HEK293 (cell line): ENCODE measurements at regions of chr11 and their contacts with region 1.

Region 1: GRCh38 chr11:118435893-118436624 is at the start of gene KMT2A:
- H3K4me3 ChIP-seq: peak within 1 kb of the TSS; percentile 92
- H3K27ac ChIP-seq: peak within 1 kb of the TSS; percentile 78
- H3K4me1 ChIP-seq: peaks cover 4% of the 10 kb centered on the region; the same call in 1 of the 2 replicates
- CTCF ChIP-seq: no peak

Region 2: GRCh38 chr11:118290923-118291322 is 145.1 kb before region 1 on chr11:
- CTCF ChIA-PET with region 1: no interaction called
- POLR2A ChIA-PET with region 1: no interaction called
- H3K4me3 ChIP-seq: no peak overlapping the region
- H3K27ac ChIP-seq: no peak overlapping the region
- H3K4me1 ChIP-seq: no peaks in the 10 kb centered on the region
- CTCF ChIP-seq: no peak

Region 3: DNA sequence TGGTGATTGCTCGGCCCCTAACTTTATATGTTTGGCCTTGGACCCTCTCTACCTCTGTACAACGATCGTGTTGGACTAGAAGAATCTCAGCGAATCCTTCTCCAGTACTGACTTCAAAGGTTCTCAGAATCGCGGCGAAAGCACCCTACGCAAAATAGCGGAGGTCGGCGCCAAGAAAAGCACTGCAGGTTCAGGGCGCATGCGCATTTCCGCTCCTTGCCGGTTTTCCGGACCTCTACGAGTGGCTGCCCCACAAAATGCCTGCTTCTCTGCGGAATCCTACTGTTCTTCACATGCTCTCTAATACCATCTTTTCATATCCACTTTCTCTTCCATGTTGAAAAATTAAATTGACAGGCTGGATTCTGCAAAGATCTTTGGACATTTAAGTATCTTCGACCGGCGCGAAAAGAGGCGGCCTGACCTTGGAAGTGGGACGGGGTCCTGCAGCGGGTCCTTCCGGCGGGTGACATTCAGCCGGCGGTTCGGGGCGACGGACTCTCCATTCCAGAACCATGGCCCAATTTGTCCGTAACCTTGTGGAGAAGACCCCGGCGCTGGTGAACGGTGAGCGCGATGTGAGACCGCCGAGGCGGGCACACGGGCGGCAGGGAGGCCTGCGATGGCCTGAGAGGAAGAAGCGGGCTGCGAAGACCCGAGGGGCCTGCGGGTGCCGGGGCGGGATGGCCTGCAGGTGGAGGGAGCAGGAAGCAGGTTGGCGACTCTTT is 34.7 kb before region 1 on chr11 and contains the start of gene ATP5MG:
- CTCF ChIA-PET with region 1: interaction called, 3 read pairs
- POLR2A ChIA-PET with region 1: interaction called, 13 read pairs
- H3K4me3 ChIP-seq: peak within 1 kb of the TSS; percentile 92
- H3K27ac ChIP-seq: peak within 1 kb of the TSS; percentile 61
- H3K4me1 ChIP-seq: peaks cover under 1% of the 10 kb centered on the region; the same call in 1 of the 2 replicates
- CTCF ChIP-seq: no peak; the same call in 1 of the 2 replicates

Region 4: GRCh38 chr11:118415739-118416284 is 20.2 kb before region 1 on chr11:
- CTCF ChIA-PET with region 1: no interaction called
- POLR2A ChIA-PET with region 1: interaction called, 14 read pairs
- H3K4me3 ChIP-seq: no peak overlapping the region
- H3K27ac ChIP-seq: no peak overlapping the region
- H3K4me1 ChIP-seq: no peaks in the 10 kb centered on the region
- CTCF ChIP-seq: no peak

Region 5: DNA sequence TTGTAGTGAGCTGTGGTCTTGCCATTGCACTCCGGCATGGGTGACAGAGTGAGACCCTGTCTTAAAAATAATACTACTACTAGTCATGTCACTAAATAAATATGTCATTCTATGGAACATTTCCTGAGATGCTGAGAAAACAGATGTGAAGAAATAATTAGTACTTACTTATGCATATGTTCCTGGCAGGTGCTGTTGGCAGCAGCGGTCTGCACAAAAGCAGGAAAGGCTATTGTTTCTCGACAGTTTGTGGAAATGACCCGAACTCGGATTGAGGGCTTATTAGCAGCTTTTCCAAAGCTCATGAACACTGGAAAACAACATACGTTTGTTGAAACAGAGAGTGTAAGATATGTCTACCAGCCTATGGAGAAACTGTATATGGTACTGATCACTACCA is 145.0 kb after region 1 on chr11:
- CTCF ChIA-PET with region 1: no interaction called
- POLR2A ChIA-PET with region 1: no interaction called
- H3K4me3 ChIP-seq: no peak overlapping the region
- H3K27ac ChIP-seq: no peak overlapping the region
- H3K4me1 ChIP-seq: no peaks in the 10 kb centered on the region
- CTCF ChIP-seq: no peak

Region 6: GRCh38 chr11:118640332-118641154 is 204.5 kb after region 1 on chr11:
- CTCF ChIA-PET with region 1: no interaction called
- POLR2A ChIA-PET with region 1: no interaction called
- H3K4me3 ChIP-seq: no peak overlapping the region
- H3K27ac ChIP-seq: no peak overlapping the region
- H3K4me1 ChIP-seq: no peaks in the 10 kb centered on the region
- CTCF ChIP-seq: peak; percentile 25; the same call in 1 of the 2 replicates

Region 7: DNA sequence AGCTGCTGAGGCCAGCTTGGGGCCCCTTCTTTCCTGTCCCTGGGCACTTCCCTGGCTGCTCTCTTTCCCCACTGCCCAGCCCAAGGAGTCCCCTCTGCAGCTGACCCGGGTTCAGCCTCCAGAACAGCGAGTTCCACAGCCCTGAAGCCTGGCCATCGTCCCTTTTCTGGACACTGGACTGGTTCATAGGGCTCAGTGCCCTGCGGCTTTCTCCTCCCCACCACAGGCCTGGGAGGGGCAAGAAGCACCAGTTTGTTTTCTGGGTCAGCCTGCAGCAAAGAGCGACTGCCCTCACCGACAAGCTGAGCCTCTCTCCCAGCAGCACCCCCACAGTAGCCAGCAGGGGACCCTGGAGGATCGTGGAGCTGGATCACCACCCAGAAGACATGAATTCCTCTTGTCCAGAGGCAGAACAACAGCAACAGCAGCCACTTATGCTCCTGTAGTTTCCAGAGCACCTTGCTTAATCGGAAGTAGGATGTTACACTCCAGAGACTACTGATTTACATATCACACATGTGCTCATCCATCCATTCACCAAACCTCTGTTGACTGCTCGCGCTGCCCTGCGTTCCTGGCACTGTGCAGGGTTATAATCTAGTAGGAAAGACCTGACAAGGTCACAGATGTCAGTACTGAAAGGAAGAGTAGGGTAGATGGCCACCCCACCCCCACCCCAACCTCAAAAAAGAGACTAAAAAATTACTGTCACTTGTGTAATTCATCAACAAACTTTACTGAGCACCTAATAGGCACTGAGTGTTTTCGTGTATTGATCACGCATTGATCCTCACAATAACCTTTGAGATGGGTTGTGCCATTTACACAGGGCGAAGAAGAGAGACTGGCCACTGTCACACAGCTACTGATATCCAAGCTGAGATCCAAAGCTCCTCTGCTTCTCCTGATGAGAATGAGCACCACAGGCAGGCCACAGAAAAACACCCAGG is 434.6 kb after region 1 on chr11:
- CTCF ChIA-PET with region 1: no interaction called
- POLR2A ChIA-PET with region 1: no interaction called
- H3K4me3 ChIP-seq: no peak overlapping the region
- H3K27ac ChIP-seq: no peak overlapping the region
- H3K4me1 ChIP-seq: no peaks in the 10 kb centered on the region
- CTCF ChIP-seq: no peak